ENCODE measurements at regions of chr19 and their contacts with region 1.

Region 1: GRCh38 chr19:13588957-13589833 is 82.9 kb upstream of the CACNA1A start:
- DNase-seq: peak; percentile 54 to 87 (median 65)
- ATAC-seq: peak in 3 of 4 donors; percentile 73 to 92 (median 83)
- H3K4me3 ChIP-seq: no peak overlapping the region
- H3K27ac ChIP-seq: no peak overlapping the region
- H3K4me1 ChIP-seq: no peaks in the 10 kb centered on the region
- H3K27me3 ChIP-seq: peaks cover 0 to 67% (median 8%) of the 10 kb centered on the region in 9 donors
- CTCF ChIP-seq: peak; percentile 89 to 100 (median 96)
- POLR2A ChIP-seq: no peak

Region 2: GRCh38 chr19:13463296-13463695 is 125.9 kb before region 1 on chr19:
- intact Hi-C with region 1: no loop called
- DNase-seq: no peak
- ATAC-seq: no peak
- H3K4me3 ChIP-seq: no peak overlapping the region
- H3K27ac ChIP-seq: no peak overlapping the region
- H3K4me1 ChIP-seq: no peaks in the 10 kb centered on the region
- H3K27me3 ChIP-seq: peaks cover 0 to 10% (median 0%) of the 10 kb centered on the region in 9 donors
- CTCF ChIP-seq: no peak
- POLR2A ChIP-seq: no peak

Region 3: DNA sequence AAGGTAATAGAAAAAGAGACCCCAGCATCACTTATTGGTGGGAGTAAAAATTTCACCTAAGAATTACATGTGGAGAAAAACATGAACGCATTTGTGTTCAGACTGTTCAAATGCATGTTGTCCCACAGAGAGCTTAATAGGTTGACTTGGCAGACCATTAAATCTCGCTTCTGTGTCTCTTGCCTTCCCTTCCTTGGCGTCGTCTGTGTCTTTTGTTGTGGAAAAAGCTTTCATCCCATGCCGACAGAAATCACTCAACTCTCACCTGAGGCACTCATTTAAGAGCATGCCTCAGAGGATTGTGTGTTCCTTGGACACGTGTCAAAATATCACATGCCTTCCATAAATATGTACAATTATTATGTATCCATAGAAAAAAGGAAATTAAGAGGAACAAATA is 58.5 kb before region 1 on chr19:
- intact Hi-C with region 1: no loop called
- DNase-seq: no peak
- ATAC-seq: no peak
- H3K4me3 ChIP-seq: no peak overlapping the region
- H3K27ac ChIP-seq: no peak overlapping the region
- H3K4me1 ChIP-seq: no peaks in the 10 kb centered on the region
- H3K27me3 ChIP-seq: peaks cover 0 to 20% (median 0%) of the 10 kb centered on the region in 9 donors
- CTCF ChIP-seq: no peak
- POLR2A ChIP-seq: no peak

Region 4: GRCh38 chr19:13718733-13719132 is 129.5 kb after region 1 on chr19:
- intact Hi-C with region 1: loop called in 1 of 10 experiments (anchors 2 kb)
- DNase-seq: peak in 3 of 5 donors; percentile 25 to 58 (median 33)
- ATAC-seq: peak in 3 of 4 donors; percentile 81 to 85 (median 81)
- H3K4me3 ChIP-seq: no peak overlapping the region
- H3K27ac ChIP-seq: no peak overlapping the region
- H3K4me1 ChIP-seq: no peaks in the 10 kb centered on the region
- H3K27me3 ChIP-seq: peaks cover 0 to 11% (median 0%) of the 10 kb centered on the region in 9 donors
- CTCF ChIP-seq: peak in 10 of 12 donors; percentile 19 to 50 (median 36)
- POLR2A ChIP-seq: no peak

Measured in heart left ventricle (tissue), 16 donors.